GM10248 (cell line): ENCODE measurements at regions of chr18 and their contacts with region 1.

Region 1: DNA sequence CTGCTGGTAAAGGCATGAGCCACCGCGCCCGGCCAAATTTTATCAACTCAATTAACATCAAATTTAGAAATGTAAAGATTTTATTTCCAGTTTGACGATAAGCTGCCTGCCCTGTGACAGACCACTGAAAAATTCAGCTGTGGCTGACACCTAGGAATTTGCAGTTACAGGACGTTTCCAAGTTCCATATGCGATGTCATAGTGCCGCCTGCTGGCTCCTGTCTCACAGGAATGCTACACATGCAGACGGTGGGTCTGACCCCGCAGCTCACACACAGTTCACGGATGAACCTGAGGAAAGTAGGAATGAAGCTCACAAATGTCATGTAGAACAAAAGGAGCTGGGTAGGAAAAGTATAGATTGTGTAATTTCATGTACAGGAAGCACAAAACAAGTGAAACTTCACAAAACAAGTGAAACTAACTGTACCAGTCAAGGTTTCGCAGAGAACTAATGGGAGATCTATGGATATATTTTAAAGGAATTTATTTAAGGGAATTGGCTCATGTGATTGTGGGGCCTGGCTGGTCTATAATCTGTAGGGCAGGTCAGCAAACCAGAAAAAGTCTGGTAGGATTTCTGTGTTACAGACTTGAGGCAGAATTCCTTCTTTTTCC is 13.2 kb upstream of the SEH1L start:
- DNase-seq: peak; percentile 73
- CTCF ChIP-seq: peak; percentile 87

Region 2: GRCh38 chr18:12726774-12727550 is 207.6 kb before region 1 on chr18:
- CTCF ChIA-PET with region 1: interaction called, 100 read pairs
- POLR2A ChIA-PET with region 1: no interaction called
- DNase-seq: peak; percentile 72
- CTCF ChIP-seq: peak; percentile 83

Region 3: GRCh38 chr18:12750076-12750714 is 184.4 kb before region 1 on chr18:
- CTCF ChIA-PET with region 1: interaction called, 37 read pairs
- POLR2A ChIA-PET with region 1: no interaction called
- DNase-seq: no peak
- CTCF ChIP-seq: no peak

Region 4: DNA sequence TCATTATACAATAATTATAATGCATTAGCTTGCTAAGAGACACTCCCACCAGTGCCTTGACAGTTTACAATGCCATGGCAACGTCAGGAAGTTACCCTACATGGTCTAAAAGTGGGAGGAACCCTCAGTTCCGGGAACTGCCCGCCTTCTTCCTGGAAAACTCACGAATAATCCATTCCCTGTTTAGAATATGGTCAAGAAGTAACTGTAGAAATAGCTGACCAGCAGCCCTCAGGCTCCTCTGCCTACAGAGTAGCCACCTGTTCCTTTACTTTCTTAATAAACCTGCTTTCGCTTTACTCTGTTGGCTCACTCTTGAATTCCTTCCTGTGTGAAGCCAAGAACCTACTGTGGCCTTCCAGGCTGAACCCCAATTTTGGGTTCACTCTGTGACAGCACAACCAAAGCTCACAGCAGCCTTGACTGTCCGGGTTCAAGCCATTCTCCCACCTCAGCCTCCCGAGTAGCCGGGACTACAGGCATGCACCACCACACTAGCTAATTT is 30.5 kb before region 1 on chr18:
- CTCF ChIA-PET with region 1: interaction called, 11 read pairs
- POLR2A ChIA-PET with region 1: no interaction called
- DNase-seq: no peak
- CTCF ChIP-seq: no peak

Region 5: DNA sequence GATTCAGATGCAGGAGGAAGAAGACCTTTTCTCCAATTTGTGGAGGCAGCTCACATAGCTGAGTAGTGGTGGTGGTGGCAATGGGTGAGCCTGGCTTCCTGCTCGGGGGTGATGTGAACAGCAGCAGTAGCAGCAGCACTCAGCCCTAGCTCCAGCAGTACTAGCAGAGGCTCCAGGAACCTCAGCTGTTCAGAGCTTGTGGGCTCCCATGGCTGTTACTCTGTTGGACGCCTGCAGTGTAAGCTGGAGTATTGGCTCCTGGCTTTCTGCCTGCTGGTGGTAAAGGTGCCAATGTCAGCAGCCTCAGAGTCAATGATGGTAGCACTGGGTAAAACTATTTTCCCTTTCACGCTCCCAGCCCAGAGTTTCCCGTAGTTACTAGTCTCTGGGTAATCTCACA is 10.1 kb after region 1 on chr18:
- CTCF ChIA-PET with region 1: interaction called, 26 read pairs
- POLR2A ChIA-PET with region 1: no interaction called
- DNase-seq: no peak
- CTCF ChIP-seq: no peak